ENCODE measurements at regions of chr10 and their contacts with region 1.

Region 1: GRCh38 chr10:70146489-70147258 is at the start of gene TYSND1:
- DNase-seq: peak; percentile 97
- H3K4me3 Mint-ChIP-seq: peak within 1 kb of the TSS; percentile 90
- H3K27ac Mint-ChIP-seq: peak within 1 kb of the TSS; percentile 93
- H3K4me1 Mint-ChIP-seq: peaks cover 33% of the 10 kb centered on the region
- H3K27me3 Mint-ChIP-seq: no peaks in the 10 kb centered on the region
- total RNA-seq, gene TYSND1: 12.5 to 13.0 TPM

Region 2: GRCh38 chr10:69644658-69645295 is 501.9 kb before region 1 on chr10:
- CTCF ChIA-PET with region 1: no interaction called
- intact Hi-C with region 1: no loop called
- DNase-seq: peak; percentile 63
- H3K4me3 Mint-ChIP-seq: no peak overlapping the region
- H3K27ac Mint-ChIP-seq: no peak overlapping the region
- H3K4me1 Mint-ChIP-seq: no peaks in the 10 kb centered on the region
- H3K27me3 Mint-ChIP-seq: peaks cover 1% of the 10 kb centered on the region

Region 3: GRCh38 chr10:70048030-70048723 is 98.5 kb before region 1 on chr10:
- CTCF ChIA-PET with region 1: no interaction called
- intact Hi-C with region 1: no loop called
- DNase-seq: no peak
- H3K4me3 Mint-ChIP-seq: no peak overlapping the region
- H3K27ac Mint-ChIP-seq: no peak overlapping the region
- H3K4me1 Mint-ChIP-seq: peaks cover 5% of the 10 kb centered on the region
- H3K27me3 Mint-ChIP-seq: peaks cover 17% of the 10 kb centered on the region

Region 4: DNA sequence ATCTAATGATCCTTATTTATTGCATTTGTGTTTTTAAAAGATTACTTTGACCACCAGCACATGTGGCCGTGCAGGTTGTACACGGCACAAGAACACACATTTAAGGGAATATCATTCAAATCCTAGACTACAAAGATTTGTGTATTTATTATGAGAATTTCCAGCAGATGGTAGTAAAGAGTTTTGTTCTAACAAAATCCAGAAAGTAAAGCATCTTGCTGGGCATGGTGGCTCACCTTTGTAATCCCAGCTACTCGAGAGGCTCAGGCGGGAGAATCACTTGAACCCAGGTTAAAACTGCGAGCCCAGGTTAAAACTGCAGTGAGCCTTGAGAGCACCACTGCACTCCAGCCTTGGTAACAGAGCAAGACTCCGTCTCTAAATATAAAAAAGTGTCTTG is 62.5 kb before region 1 on chr10:
- CTCF ChIA-PET with region 1: interaction called, 4 read pairs
- intact Hi-C with region 1: loop called (anchors 2 kb)
- DNase-seq: no peak
- H3K4me3 Mint-ChIP-seq: no peak overlapping the region
- H3K27ac Mint-ChIP-seq: no peak overlapping the region
- H3K4me1 Mint-ChIP-seq: no peaks in the 10 kb centered on the region
- H3K27me3 Mint-ChIP-seq: no peaks in the 10 kb centered on the region

Region 5: GRCh38 chr10:70121281-70121949 is 25.3 kb before region 1 on chr10:
- CTCF ChIA-PET with region 1: interaction called, 69 read pairs
- intact Hi-C with region 1: loop called (anchors 1 kb)
- DNase-seq: no peak
- H3K4me3 Mint-ChIP-seq: no peak overlapping the region
- H3K27ac Mint-ChIP-seq: no peak overlapping the region
- H3K4me1 Mint-ChIP-seq: peaks cover 2% of the 10 kb centered on the region
- H3K27me3 Mint-ChIP-seq: no peaks in the 10 kb centered on the region

Region 6: GRCh38 chr10:70169649-70170364 is 23.1 kb after region 1 on chr10:
- CTCF ChIA-PET with region 1: interaction called, 32 read pairs
- intact Hi-C with region 1: loop called (anchors 1 kb)
- DNase-seq: no peak
- H3K4me3 Mint-ChIP-seq: peak overlapping the region; percentile 87
- H3K27ac Mint-ChIP-seq: peak overlapping the region; percentile 90
- H3K4me1 Mint-ChIP-seq: peaks cover 66% of the 10 kb centered on the region
- H3K27me3 Mint-ChIP-seq: no peaks in the 10 kb centered on the region

Region 7: GRCh38 chr10:70233109-70233938 is 86.7 kb after region 1 on chr10 and contains the start of gene PPA1:
- CTCF ChIA-PET with region 1: interaction called, 5 read pairs
- intact Hi-C with region 1: loop called (anchors 1 kb)
- DNase-seq: peak; percentile 99
- H3K4me3 Mint-ChIP-seq: peak within 1 kb of the TSS; percentile 87
- H3K27ac Mint-ChIP-seq: peak within 1 kb of the TSS; percentile 93
- H3K4me1 Mint-ChIP-seq: peaks cover 36% of the 10 kb centered on the region
- H3K27me3 Mint-ChIP-seq: no peaks in the 10 kb centered on the region
- total RNA-seq, gene PPA1: 392 to 408 TPM

Region 8: GRCh38 chr10:70381471-70382421 is 235.1 kb after region 1 on chr10:
- CTCF ChIA-PET with region 1: interaction called, 6 read pairs
- intact Hi-C with region 1: loop called (anchors 1 kb)
- DNase-seq: peak; percentile 42
- H3K4me3 Mint-ChIP-seq: peak overlapping the region; percentile 84
- H3K27ac Mint-ChIP-seq: no peak overlapping the region
- H3K4me1 Mint-ChIP-seq: peaks cover 10% of the 10 kb centered on the region
- H3K27me3 Mint-ChIP-seq: peaks cover 2% of the 10 kb centered on the region

Region 9: GRCh38 chr10:70615784-70616522 is 469.3 kb after region 1 on chr10:
- CTCF ChIA-PET with region 1: no interaction called
- intact Hi-C with region 1: no loop called
- DNase-seq: no peak
- H3K4me3 Mint-ChIP-seq: no peak overlapping the region
- H3K27ac Mint-ChIP-seq: no peak overlapping the region
- H3K4me1 Mint-ChIP-seq: peaks cover 12% of the 10 kb centered on the region
- H3K27me3 Mint-ChIP-seq: no peaks in the 10 kb centered on the region

Measured in activated naive CD4-positive, alpha-beta T cell treated with anti-CD3 and anti-CD28 coated beads for 36 hours (primary cell).